ENCODE measurements at regions of chr12 and their contacts with region 1.

Region 1: GRCh38 chr12:56315622-56316473 is at the start of gene CNPY2:
- DNase-seq: peak; percentile 95
- H3K4me3 Mint-ChIP-seq: peak within 1 kb of the TSS; percentile 98
- H3K27ac Mint-ChIP-seq: peak within 1 kb of the TSS; percentile 97
- H3K4me1 Mint-ChIP-seq: peaks cover 16% of the 10 kb centered on the region
- H3K27me3 Mint-ChIP-seq: no peaks in the 10 kb centered on the region
- total RNA-seq, gene CNPY2: 74.7 to 91.6 TPM

Region 2: GRCh38 chr12:55847603-55848291 is 468.1 kb before region 1 on chr12:
- CTCF ChIA-PET with region 1: no interaction called
- POLR2A ChIA-PET with region 1: no interaction called
- intact Hi-C with region 1: no loop called
- DNase-seq: peak; percentile 63
- H3K4me3 Mint-ChIP-seq: no peak overlapping the region
- H3K27ac Mint-ChIP-seq: peak overlapping the region; percentile 73
- H3K4me1 Mint-ChIP-seq: peaks cover 15% of the 10 kb centered on the region
- H3K27me3 Mint-ChIP-seq: peaks cover 2% of the 10 kb centered on the region

Region 3: GRCh38 chr12:56333679-56334489 is 18.0 kb after region 1 on chr12 and contains the start of gene PAN2:
- CTCF ChIA-PET with region 1: interaction called, 6 read pairs
- POLR2A ChIA-PET with region 1: interaction called, 15 read pairs
- intact Hi-C with region 1: loop called (anchors 1 kb)
- DNase-seq: peak; percentile 97
- H3K4me3 Mint-ChIP-seq: peak within 1 kb of the TSS; percentile 94
- H3K27ac Mint-ChIP-seq: peak within 1 kb of the TSS; percentile 99
- H3K4me1 Mint-ChIP-seq: peaks cover 43% of the 10 kb centered on the region
- H3K27me3 Mint-ChIP-seq: no peaks in the 10 kb centered on the region
- total RNA-seq, gene PAN2: 49.0 to 51.2 TPM

Region 4: DNA sequence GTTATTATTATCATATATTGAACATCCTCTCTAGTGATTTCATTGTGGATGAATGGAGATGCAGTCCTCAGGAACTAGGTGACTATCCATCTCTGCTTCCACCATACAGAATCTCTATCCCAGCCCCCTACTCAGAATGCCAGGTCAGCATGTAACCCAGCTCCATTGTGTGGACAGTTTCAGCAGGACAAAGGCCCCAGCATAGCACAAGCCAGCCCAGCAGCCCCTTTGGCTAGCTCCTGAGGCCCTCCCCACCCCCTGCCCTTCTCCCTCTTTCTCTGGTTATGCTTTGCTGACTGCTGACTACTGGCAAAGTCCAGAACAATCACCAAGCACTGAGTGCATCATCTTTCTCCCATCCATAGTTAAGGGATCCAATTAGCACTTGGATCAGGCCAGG is 146.7 kb after region 1 on chr12:
- CTCF ChIA-PET with region 1: interaction called, 32 read pairs
- POLR2A ChIA-PET with region 1: interaction called, 4 read pairs
- intact Hi-C with region 1: loop called (anchors 1 kb)
- DNase-seq: no peak
- H3K4me3 Mint-ChIP-seq: no peak overlapping the region
- H3K27ac Mint-ChIP-seq: no peak overlapping the region
- H3K4me1 Mint-ChIP-seq: peaks cover 7% of the 10 kb centered on the region
- H3K27me3 Mint-ChIP-seq: no peaks in the 10 kb centered on the region

Region 5: DNA sequence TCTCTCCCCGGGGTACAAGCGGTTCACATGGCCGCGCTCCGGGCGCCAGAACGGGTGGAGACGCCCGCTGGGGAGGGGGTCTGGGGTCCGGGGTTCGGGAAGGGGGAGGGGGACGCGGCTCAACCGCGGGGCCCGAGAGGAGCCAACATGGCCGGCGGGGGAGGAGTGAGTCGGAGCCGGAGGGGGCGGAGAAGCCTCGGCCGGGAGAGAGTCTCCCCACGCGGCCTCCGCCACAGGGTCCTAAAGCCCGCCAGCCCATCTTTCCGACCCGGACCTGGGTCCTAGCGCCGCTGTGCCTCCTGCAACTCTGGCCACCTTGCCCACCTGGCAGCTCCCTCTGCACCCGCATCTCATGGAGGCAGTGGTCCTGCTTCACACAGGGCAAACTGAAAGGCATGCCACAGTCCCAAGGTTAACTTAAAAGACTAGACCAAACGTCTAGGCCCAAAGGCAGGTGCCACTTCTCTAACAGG is 314.3 kb after region 1 on chr12 and contains the start of gene BAZ2A:
- CTCF ChIA-PET with region 1: no interaction called
- POLR2A ChIA-PET with region 1: no interaction called
- intact Hi-C with region 1: loop called (anchors 5 kb)
- DNase-seq: peak; percentile 92
- H3K4me3 Mint-ChIP-seq: peak within 1 kb of the TSS; percentile 93
- H3K27ac Mint-ChIP-seq: peak within 1 kb of the TSS; percentile 93
- H3K4me1 Mint-ChIP-seq: peaks cover 71% of the 10 kb centered on the region
- H3K27me3 Mint-ChIP-seq: no peaks in the 10 kb centered on the region
- total RNA-seq, gene BAZ2A: 90.7 to 111 TPM

Region 6: DNA sequence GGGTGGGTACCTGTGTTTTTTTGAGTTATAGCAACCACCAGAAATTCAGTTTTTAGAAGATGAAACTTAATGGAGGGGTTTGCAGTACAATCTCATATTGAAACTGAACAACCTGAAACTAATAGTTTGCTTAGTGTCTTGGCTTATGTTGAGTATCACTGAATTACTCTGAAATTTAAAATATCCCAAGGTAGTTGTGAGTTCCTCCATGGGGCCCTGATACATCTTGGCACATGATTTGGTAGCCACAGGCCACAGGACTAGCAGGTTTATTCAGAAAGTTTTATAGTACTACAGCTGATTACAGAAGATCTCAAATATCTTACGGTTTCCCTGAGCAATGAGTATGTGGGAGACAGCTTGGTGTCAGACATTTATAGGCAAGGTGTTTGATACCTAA is 361.8 kb after region 1 on chr12:
- CTCF ChIA-PET with region 1: no interaction called
- POLR2A ChIA-PET with region 1: no interaction called
- intact Hi-C with region 1: no loop called
- DNase-seq: peak; percentile 57
- H3K4me3 Mint-ChIP-seq: no peak overlapping the region
- H3K27ac Mint-ChIP-seq: peak overlapping the region; percentile 56
- H3K4me1 Mint-ChIP-seq: peaks cover 67% of the 10 kb centered on the region
- H3K27me3 Mint-ChIP-seq: no peaks in the 10 kb centered on the region